ENCODE measurements at regions of chr10 and their contacts with region 1.

Region 1: GRCh38 chr10:71850637-71851464 is at the start of gene PSAP:
- DNase-seq: peak; percentile 96 to 99 (median 99)
- ATAC-seq: peak; percentile 97
- H3K4me3 ChIP-seq: peak within 1 kb of the TSS; percentile 87 to 94
- H3K4me3 Mint-ChIP-seq: peak within 1 kb of the TSS; percentile 94
- H3K27ac ChIP-seq: peak within 1 kb of the TSS; percentile 78 to 79
- H3K27ac Mint-ChIP-seq: peak within 1 kb of the TSS; percentile 94
- H3K4me1 ChIP-seq: peaks cover 26% of the 10 kb centered on the region
- H3K4me1 Mint-ChIP-seq: peaks cover 49% of the 10 kb centered on the region
- H3K27me3 ChIP-seq: no peaks in the 10 kb centered on the region
- H3K27me3 Mint-ChIP-seq: no peaks in the 10 kb centered on the region
- CTCF ChIP-seq: no peak
- total RNA-seq, gene PSAP: 156 to 161 TPM

Region 2: DNA sequence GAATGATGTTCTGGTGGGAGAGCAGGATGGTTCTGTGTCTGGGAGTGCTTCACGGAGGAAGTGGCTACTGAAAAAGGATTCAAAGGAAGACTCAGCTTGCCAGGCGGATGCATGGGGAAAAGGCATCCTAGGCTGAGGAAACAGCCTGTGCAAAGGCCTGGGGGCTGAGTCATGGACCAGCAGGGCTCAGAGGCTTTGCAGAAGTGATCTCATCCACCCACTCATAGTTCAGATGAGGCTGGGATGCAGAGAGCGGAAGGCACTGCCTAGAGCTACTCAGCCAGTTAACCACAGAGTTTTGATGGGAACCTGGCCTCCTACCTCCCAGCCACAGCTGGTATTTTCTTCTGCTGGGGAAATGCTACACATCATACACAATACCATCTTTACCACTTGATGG is 1194.4 kb before region 1 on chr10:
- CTCF ChIA-PET with region 1: no interaction called
- POLR2A ChIA-PET with region 1: no interaction called
- intact Hi-C with region 1: no loop called
- DNase-seq: no peak
- ATAC-seq: peak; percentile 40
- H3K4me3 ChIP-seq: no peak overlapping the region
- H3K4me3 Mint-ChIP-seq: no peak overlapping the region
- H3K27ac ChIP-seq: no peak overlapping the region
- H3K27ac Mint-ChIP-seq: no peak overlapping the region
- H3K4me1 ChIP-seq: peaks cover 9% of the 10 kb centered on the region
- H3K4me1 Mint-ChIP-seq: peaks cover 9% of the 10 kb centered on the region
- H3K27me3 ChIP-seq: no peaks in the 10 kb centered on the region
- H3K27me3 Mint-ChIP-seq: no peaks in the 10 kb centered on the region
- CTCF ChIP-seq: no peak

Region 3: DNA sequence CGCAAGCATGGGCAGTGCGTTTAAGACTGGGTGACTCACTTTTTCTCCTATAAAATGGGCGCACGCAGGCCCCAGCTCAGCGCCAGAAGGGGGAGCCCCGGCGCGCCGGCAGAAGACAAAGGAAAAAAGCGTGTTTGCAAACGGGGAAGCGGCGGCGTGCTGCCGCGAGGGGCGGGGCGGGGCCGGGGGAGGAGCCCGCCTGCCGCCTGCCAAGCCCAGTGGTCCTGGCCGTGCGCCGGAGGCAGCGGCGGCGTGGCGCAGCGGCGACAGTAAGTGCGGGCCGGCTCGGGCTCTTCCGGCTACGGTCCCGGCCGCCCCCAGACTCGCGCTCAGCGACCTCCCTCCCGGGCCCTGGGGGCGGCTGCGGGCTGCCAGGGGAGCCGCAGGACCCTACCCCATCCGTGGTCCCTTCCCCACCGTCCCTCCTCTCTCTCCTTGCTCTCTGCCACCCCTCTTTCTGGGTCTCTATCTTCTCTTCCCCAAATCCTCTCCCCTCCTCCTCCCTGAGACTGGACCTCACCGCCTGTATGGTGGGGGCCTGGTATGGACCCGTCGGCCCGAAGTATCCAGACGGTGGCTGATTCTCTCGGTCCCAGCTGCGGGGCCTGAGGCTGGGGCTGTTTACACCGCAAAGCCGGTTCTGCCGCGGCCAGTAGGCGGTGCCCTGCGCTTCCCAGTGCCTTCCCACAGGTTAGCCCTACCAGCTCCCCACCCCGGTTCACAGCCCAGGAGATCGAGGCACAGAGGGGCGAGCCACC is 531.6 kb before region 1 on chr10 and contains the start of gene SLC29A3:
- CTCF ChIA-PET with region 1: interaction called, 4 read pairs
- POLR2A ChIA-PET with region 1: no interaction called
- intact Hi-C with region 1: loop called in 1 of 2 experiments (anchors 1 kb)
- DNase-seq: peak; percentile 69 to 92 (median 80)
- ATAC-seq: peak; percentile 87
- H3K4me3 ChIP-seq: peak within 1 kb of the TSS; percentile 83 to 91
- H3K4me3 Mint-ChIP-seq: peak within 1 kb of the TSS; percentile 92
- H3K27ac ChIP-seq: peak within 1 kb of the TSS; percentile 58 to 61
- H3K27ac Mint-ChIP-seq: peak within 1 kb of the TSS; percentile 80
- H3K4me1 ChIP-seq: peaks cover 18% of the 10 kb centered on the region
- H3K4me1 Mint-ChIP-seq: peaks cover 45% of the 10 kb centered on the region
- H3K27me3 ChIP-seq: no peaks in the 10 kb centered on the region
- H3K27me3 Mint-ChIP-seq: no peaks in the 10 kb centered on the region
- CTCF ChIP-seq: peak; percentile 38
- total RNA-seq, gene SLC29A3: 1.4 to 2.9 TPM

Region 4: DNA sequence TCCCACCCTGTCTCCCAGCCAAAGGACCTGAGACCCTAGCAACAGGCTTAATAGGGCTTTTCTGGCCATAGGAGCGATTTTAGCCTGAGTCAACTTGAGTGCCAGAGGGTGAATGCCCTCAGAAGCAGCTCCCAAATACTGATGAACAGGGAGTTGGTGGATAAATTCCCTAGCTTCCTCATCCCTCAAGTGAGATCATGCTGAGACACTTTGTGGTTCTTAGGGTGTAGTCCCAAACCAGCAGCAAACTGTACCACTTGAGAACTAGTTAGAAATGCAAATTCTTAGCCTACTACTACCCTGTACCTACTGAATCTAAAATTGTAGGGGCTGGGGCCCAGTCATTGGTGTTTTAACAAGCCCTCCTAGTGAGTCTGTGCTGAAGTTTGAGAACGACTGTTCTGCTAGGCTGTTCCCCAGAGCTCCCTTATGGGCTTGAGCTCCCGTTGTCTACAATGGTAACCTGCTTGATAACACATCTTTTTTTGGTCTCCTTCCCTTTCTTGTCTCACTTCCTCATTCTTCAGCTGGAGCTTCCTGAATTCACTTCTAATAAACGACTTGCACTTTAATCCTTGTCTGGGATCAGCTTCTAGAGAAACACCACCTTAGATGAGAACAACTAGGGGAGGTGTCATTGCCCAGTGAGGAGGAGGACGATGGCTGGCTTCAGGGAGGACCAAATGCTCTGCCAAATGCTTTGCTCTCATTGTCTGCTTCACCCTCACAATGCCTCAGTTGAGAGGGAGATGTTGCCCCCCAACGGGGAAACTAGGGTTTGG is 472.3 kb before region 1 on chr10:
- CTCF ChIA-PET with region 1: no interaction called
- POLR2A ChIA-PET with region 1: interaction called, 3 read pairs
- intact Hi-C with region 1: loop called in 1 of 2 experiments (anchors 5 kb)
- DNase-seq: no peak
- ATAC-seq: no peak
- H3K4me3 ChIP-seq: no peak overlapping the region
- H3K4me3 Mint-ChIP-seq: peak overlapping the region; percentile 18
- H3K27ac ChIP-seq: no peak overlapping the region
- H3K27ac Mint-ChIP-seq: no peak overlapping the region
- H3K4me1 ChIP-seq: peaks cover 6% of the 10 kb centered on the region
- H3K4me1 Mint-ChIP-seq: peaks cover 9% of the 10 kb centered on the region
- H3K27me3 ChIP-seq: peaks cover 0 to 3% of the 10 kb centered on the region in 2 experiments
- H3K27me3 Mint-ChIP-seq: peaks cover 2% of the 10 kb centered on the region
- CTCF ChIP-seq: no peak

Region 5: DNA sequence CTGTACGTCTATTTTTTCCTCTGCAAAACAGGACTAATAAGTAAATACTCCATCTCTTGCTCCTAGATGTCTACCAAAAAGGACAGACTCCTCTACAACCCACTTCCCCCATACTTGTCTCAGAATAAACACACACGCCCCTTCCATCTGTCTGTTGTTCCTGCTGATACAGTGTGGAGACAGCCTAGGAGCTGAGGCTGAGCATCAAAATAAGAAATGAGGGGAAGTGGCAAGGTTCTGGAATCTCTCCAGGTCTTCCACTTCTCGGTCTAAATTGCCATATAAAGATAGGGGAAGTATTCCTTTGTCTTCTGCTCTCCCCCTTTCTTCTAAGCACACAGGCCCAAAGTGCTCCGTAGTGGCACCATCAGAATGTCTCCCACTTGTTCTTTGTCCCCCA is 46.8 kb before region 1 on chr10:
- CTCF ChIA-PET with region 1: no interaction called
- POLR2A ChIA-PET with region 1: no interaction called
- intact Hi-C with region 1: no loop called
- DNase-seq: no peak
- ATAC-seq: no peak
- H3K4me3 ChIP-seq: no peak overlapping the region
- H3K4me3 Mint-ChIP-seq: no peak overlapping the region
- H3K27ac ChIP-seq: no peak overlapping the region
- H3K27ac Mint-ChIP-seq: no peak overlapping the region
- H3K4me1 ChIP-seq: no peaks in the 10 kb centered on the region
- H3K4me1 Mint-ChIP-seq: no peaks in the 10 kb centered on the region
- H3K27me3 ChIP-seq: no peaks in the 10 kb centered on the region
- H3K27me3 Mint-ChIP-seq: no peaks in the 10 kb centered on the region
- CTCF ChIP-seq: no peak

Region 6: DNA sequence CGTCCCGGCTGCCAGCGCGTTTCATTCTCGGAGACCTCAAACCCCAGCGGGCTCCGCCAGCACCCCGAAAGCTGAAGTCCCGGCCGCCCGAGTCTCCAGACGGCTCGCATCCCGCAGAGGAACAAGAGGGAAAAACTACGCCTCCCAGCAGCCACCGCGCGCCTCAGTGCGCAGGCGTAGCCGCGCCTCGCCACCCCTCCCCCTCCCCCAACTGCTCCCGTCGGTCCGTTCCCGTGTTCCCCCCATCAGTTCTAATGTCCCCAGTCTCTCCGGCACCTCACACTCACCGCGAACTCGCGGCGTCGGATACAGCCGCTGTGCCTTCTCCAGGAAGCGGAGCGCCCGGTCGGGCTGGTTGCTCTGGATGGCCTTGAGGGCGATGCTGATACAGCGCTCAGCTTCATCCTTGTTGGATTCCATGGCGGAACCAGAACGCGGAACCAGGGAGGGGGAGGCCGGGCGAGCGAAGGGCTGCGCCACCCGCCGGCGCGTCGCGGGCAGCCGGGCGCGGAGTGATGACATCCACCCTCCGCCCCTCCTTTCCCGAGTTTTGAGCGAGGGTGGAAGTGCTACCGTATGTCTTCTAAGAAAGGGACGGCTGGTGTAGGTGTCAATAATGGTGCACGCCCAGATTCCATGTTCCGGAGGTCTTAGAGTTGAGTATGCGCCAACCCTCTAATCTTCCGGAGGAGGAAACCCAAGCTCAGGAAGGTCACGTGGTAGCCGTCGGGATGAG is 503.8 kb after region 1 on chr10 and contains the start of gene DNAJB12:
- CTCF ChIA-PET with region 1: no interaction called
- POLR2A ChIA-PET with region 1: no interaction called
- intact Hi-C with region 1: loop called in 1 of 2 experiments (anchors 2 kb)
- DNase-seq: peak; percentile 76 to 95 (median 88)
- ATAC-seq: peak; percentile 82
- H3K4me3 ChIP-seq: peak within 1 kb of the TSS; percentile 96 to 98
- H3K4me3 Mint-ChIP-seq: peak within 1 kb of the TSS; percentile 98
- H3K27ac ChIP-seq: peak within 1 kb of the TSS; percentile 87 to 97
- H3K27ac Mint-ChIP-seq: peak within 1 kb of the TSS; percentile 96
- H3K4me1 ChIP-seq: peaks cover 19% of the 10 kb centered on the region
- H3K4me1 Mint-ChIP-seq: peaks cover 45% of the 10 kb centered on the region
- H3K27me3 ChIP-seq: no peaks in the 10 kb centered on the region
- H3K27me3 Mint-ChIP-seq: no peaks in the 10 kb centered on the region
- CTCF ChIP-seq: no peak
- total RNA-seq, gene DNAJB12: 33.9 to 37.5 TPM

Region 7: DNA sequence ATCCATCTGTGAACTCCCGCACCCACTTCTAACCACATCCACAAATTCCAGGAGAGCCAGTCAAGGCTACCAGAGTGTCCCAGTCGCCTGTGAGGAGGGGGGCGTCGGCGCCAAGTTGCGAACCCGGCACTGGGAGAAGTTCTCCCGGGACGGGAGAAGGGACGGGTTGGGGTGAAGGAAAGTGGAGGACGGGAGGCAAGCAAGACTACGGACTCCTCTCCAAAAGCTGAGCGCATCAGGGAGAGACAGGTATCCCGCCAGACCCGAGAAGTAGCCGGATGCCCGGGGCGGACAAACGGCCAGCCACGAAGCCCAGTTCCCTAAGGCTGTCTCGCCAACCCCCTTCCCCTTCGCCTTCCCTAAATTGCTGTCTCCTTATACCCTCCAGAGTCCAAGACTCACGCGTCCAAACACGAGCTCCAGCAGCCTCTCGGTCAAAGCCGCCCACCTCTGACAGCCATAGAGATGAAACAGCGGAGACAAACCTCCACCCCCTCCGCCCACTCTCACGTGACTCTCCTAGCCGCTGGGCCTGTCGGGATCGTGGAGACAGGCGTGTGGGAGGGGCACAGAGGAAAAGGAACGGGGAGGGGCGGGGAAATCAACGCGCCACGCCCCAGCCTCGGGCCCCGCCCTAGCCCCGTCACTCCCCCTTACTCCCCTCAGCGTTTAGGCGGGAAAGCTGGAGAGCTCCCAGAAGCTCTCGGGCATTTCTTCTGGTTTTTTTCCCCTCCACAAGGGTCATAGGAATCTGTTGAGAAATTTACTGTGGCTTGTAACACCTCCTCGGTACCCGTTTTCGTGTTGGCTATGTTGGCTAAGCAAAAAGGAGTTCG is 775.0 kb after region 1 on chr10 and contains the start of gene MICU1:
- CTCF ChIA-PET with region 1: no interaction called
- POLR2A ChIA-PET with region 1: no interaction called
- intact Hi-C with region 1: loop called in 1 of 2 experiments (anchors 10 kb)
- DNase-seq: peak; percentile 84 to 97 (median 93)
- ATAC-seq: peak; percentile 99
- H3K4me3 ChIP-seq: peak within 1 kb of the TSS; percentile 91 to 99
- H3K4me3 Mint-ChIP-seq: peak within 1 kb of the TSS; percentile 98
- H3K27ac ChIP-seq: peak within 1 kb of the TSS; percentile 63 to 64
- H3K27ac Mint-ChIP-seq: peak within 1 kb of the TSS; percentile 92
- H3K4me1 ChIP-seq: peaks cover 11% of the 10 kb centered on the region
- H3K4me1 Mint-ChIP-seq: peaks cover 23% of the 10 kb centered on the region
- H3K27me3 ChIP-seq: no peaks in the 10 kb centered on the region
- H3K27me3 Mint-ChIP-seq: no peaks in the 10 kb centered on the region
- CTCF ChIP-seq: no peak
- total RNA-seq, gene MICU1: 8.2 to 11.3 TPM

Region 8: DNA sequence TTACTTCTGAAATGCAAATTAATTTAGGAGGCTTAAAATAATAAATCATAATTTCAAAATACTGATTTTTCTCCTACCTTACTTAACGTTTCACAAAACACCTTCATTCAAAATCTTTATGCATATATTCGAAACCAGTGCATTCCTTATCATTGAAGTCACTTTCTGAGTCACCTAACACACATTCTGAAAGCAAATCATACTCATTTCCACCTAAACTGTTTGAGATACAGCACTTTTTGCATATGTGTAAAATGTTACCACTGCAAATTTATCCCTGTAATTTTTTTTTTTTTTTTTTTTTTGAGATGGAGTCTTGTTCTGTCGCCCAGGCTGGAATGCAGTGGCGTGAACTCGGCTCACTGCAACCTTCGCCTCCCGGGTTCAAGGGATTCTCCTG is 1629.3 kb after region 1 on chr10:
- CTCF ChIA-PET with region 1: no interaction called
- POLR2A ChIA-PET with region 1: no interaction called
- intact Hi-C with region 1: loop called in 1 of 2 experiments (anchors 5 kb)
- DNase-seq: no peak
- ATAC-seq: no peak
- H3K4me3 ChIP-seq: no peak overlapping the region
- H3K4me3 Mint-ChIP-seq: no peak overlapping the region
- H3K27ac ChIP-seq: no peak overlapping the region
- H3K27ac Mint-ChIP-seq: no peak overlapping the region
- H3K4me1 ChIP-seq: no peaks in the 10 kb centered on the region
- H3K4me1 Mint-ChIP-seq: peaks cover 22% of the 10 kb centered on the region
- H3K27me3 ChIP-seq: no peaks in the 10 kb centered on the region
- H3K27me3 Mint-ChIP-seq: no peaks in the 10 kb centered on the region
- CTCF ChIP-seq: no peak